SK-N-SH (cell line): ENCODE measurements at regions of chr20 and their contacts with region 1.

Region 1: DNA sequence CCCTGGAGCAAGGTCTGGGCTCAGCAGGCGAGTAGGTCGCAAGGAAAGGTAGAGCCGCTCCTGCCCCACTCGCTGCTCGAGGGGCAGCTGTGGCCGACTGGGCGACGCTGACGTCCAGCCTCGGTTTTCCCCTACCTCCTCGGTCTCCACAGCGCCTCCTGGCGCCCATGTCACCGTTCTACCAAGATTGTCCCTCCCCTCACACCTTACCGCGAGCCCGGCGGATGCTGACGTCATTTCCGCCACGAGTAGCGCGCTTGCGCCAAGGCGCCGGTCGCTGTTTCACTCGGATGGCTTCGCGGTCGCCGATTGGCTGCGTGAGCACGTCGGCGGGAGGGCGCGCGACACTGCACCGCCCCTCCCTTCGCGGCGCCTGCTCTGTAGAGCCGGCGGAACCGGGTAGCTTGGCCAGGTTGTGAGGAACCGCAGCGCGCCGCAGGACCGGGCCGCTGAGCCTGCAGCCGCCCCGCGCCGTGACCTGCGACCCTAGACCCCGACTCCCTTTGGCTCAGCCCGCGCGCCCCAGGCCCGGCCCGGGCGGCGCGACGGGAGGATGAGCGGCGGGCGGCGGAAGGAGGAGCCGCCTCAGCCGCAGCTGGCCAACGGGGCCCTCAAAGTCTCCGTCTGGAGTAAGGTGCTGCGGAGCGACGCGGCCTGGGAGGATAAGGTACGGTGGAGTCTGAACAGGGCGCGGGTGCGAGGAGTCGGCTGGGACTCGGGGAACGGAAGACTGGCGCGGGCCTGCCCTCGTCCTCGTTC is at the start of gene RAB5IF:
- DNase-seq: peak; percentile 96
- H3K4me3 ChIP-seq: peak within 1 kb of the TSS; percentile 76 to 99
- H3K27ac ChIP-seq: peak within 1 kb of the TSS; percentile 64 to 73
- H3K4me1 ChIP-seq: peaks cover 4 to 12% of the 10 kb centered on the region in 2 experiments; a peak in 1 of 4 replicates
- H3K27me3 ChIP-seq: no peaks in the 10 kb centered on the region
- CTCF ChIP-seq: peak; percentile 80
- EP300 ChIP-seq: no peak; a peak in 1 of 4 replicates
- RAD21 ChIP-seq: peak; percentile 69
- polyA plus RNA-seq, gene RAB5IF: 91.1 and 108 TPM in 2 replicates

Region 2: DNA sequence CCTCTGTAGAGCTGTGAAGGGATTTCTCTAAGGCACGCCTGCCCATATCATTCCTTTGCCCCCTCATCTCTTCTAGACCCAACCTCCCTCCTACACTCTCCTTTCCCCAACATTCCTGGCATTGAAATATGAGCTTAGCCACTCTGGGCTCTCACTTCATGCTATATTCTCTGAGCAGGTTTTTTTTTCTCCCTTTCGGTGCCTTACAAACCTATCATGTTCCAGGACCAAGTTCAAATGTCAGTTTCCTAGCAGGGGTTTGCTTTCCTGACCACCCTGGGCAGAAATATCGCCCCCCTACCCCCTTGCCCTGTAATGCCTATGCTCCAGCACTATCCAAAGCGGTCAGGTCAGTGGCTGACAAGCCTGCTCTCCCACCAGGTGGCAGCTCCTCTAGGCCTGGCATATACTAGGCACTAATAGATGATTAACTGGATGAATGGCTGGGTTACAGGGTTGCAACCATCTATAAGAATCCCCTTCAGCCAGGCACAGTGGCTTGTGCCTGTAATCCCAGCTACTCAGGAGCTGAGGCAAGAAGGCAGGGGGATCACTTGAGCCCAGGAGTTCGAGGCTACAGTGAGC is 395.1 kb before region 1 on chr20:
- CTCF ChIA-PET with region 1: no interaction called
- POLR2A ChIA-PET with region 1: no interaction called
- DNase-seq: no peak
- H3K4me3 ChIP-seq: no peak overlapping the region
- H3K27ac ChIP-seq: no peak overlapping the region
- H3K4me1 ChIP-seq: no peaks in the 10 kb centered on the region
- H3K27me3 ChIP-seq: no peaks in the 10 kb centered on the region
- CTCF ChIP-seq: 0 out of 2 replicates have a peak, but pooled peaks have one; percentile 11
- EP300 ChIP-seq: no peak
- RAD21 ChIP-seq: peak; percentile 6; the same call in 1 of the 2 replicates

Region 3: DNA sequence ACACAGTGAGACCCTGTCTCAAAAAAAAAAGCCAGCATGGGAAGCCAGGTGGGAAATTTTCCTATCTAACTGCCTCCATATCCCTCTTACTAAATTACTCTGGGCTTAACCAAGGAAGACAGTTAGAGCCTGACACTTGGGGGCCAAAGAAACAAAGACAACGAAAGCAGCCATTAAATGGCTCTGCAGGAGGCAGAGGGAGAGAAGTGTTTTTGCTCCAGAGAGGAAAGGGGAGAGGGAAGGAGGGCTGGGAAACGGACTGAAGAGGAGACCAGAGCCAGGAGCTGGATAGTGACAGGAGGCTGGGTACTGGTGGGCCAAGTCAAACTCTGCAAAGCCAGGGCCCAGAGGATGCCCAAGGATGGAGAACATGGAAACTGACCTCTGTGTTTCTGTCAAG is 42.9 kb before region 1 on chr20:
- CTCF ChIA-PET with region 1: interaction called, 18 read pairs
- POLR2A ChIA-PET with region 1: interaction called, 3 read pairs
- DNase-seq: no peak
- H3K4me3 ChIP-seq: no peak overlapping the region
- H3K27ac ChIP-seq: no peak overlapping the region
- H3K4me1 ChIP-seq: no peaks in the 10 kb centered on the region
- H3K27me3 ChIP-seq: no peaks in the 10 kb centered on the region
- CTCF ChIP-seq: no peak
- EP300 ChIP-seq: no peak
- RAD21 ChIP-seq: no peak

Region 4: DNA sequence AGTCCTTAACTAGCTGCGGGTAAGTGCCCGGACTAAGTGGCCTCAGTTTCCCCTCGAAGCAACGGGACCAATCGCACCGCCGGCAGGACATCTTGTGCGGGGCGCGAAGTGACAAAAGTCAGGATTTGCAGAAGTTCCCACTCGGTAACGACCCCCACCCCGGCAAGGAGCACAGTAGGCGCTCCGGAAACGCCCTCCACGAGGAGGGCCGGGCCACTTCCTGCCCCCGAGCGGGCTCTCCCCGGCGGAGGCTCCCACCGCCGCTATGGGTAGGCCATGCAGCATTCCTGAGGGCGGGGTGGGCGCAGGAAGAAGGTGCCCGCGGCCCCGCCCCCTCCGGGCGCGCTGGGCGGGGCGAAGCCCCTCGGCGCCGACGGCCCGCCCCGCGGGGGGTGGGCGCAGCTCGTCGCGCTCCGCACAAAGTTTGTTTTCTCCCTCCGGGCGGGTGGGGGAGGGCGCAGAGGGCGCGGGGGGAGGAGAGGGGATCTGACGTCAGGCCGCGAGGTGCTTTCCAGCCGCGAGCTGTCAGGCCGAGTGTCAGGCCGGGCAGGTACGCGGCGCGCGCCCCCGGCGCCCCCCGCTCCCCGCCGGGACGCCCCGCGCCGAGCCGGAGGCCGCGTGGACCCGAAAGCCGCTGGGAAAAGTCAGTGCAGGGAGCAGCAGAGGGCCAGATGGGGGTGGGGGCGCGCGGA is 32.3 kb before region 1 on chr20 and contains the start of gene TGIF2:
- CTCF ChIA-PET with region 1: interaction called, 20 read pairs
- POLR2A ChIA-PET with region 1: interaction called, 6 read pairs
- DNase-seq: peak; percentile 96
- H3K4me3 ChIP-seq: peak within 1 kb of the TSS; percentile 65 to 77
- H3K27ac ChIP-seq: peak within 1 kb of the TSS; percentile 55 to 78
- H3K4me1 ChIP-seq: peaks cover 17 to 20% of the 10 kb centered on the region in 2 experiments; a peak in 3 of 4 replicates
- H3K27me3 ChIP-seq: no peaks in the 10 kb centered on the region
- CTCF ChIP-seq: no peak
- EP300 ChIP-seq: no peak
- RAD21 ChIP-seq: no peak
- polyA plus RNA-seq, gene TGIF2: 10.3 and 10.8 TPM in 2 replicates

Region 5: GRCh38 chr20:36591854-36592641 is 13.5 kb before region 1 on chr20:
- CTCF ChIA-PET with region 1: interaction called, 37 read pairs
- POLR2A ChIA-PET with region 1: interaction called, 3 read pairs
- DNase-seq: peak; percentile 46
- H3K4me3 ChIP-seq: no peak overlapping the region
- H3K27ac ChIP-seq: no peak overlapping the region
- H3K4me1 ChIP-seq: no peaks in the 10 kb centered on the region
- H3K27me3 ChIP-seq: no peaks in the 10 kb centered on the region
- CTCF ChIP-seq: peak; percentile 63
- EP300 ChIP-seq: no peak
- RAD21 ChIP-seq: peak; percentile 55

Region 6: DNA sequence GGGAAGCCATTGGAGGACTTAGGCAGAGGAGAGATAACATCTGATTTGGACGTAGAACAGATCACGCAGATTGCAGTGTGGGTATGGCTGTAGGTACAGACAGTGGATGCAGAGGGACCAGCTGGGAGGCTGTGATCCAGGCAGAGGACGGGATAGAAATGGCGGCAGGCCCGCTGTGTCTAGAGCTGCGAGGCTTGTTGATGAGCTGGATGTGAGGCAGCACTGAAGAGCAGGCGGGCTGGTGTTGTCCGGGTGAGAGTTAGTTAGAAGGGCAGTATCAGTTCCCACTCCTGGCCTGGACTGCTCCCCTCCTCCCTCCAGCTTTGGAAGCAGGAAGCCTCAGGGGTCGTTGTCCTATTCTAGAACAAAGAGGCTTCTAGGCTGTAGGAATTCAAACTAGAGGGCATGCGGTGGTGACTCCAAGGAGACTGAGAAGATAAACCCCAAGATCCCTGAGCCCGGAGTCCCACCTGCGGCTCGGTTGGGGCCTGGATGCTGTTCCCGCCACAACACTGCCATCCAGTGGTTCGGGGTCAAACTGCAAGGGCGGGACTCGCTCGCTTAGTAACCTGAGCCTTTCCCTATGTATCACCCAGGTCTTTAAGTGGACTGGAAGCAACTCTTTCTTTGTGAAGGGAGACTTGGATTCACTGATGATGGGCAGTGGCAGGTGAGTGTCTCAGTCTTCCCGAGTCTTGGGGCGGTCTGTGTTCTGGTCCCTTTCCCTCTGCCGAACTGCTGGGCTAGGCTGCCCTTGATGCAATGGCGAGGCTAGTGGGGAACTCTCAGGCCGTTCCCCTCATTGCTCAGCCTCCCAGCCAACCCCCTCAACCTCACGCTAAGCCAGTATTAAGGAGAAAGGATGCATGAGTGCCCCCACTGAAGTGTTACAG is 281.5 kb after region 1 on chr20:
- CTCF ChIA-PET with region 1: interaction called, 10 read pairs
- POLR2A ChIA-PET with region 1: no interaction called
- DNase-seq: peak; percentile 87
- H3K4me3 ChIP-seq: no peak overlapping the region; a peak in 1 of 4 replicates
- H3K27ac ChIP-seq: no peak overlapping the region
- H3K4me1 ChIP-seq: peaks cover 0 to 7% of the 10 kb centered on the region in 2 experiments; a peak in 2 of 4 replicates
- H3K27me3 ChIP-seq: no peaks in the 10 kb centered on the region
- CTCF ChIP-seq: peak; percentile 91
- EP300 ChIP-seq: no peak
- RAD21 ChIP-seq: peak; percentile 96

Region 7: GRCh38 chr20:36967636-36968035 is 362.1 kb after region 1 on chr20:
- CTCF ChIA-PET with region 1: no interaction called
- POLR2A ChIA-PET with region 1: no interaction called
- DNase-seq: no peak
- H3K4me3 ChIP-seq: no peak overlapping the region
- H3K27ac ChIP-seq: no peak overlapping the region
- H3K4me1 ChIP-seq: no peaks in the 10 kb centered on the region
- H3K27me3 ChIP-seq: no peaks in the 10 kb centered on the region
- CTCF ChIP-seq: no peak
- EP300 ChIP-seq: no peak
- RAD21 ChIP-seq: no peak